Heart left ventricle (tissue), 16 donors: ENCODE measurements at regions of chr6 and their contacts with region 1.

Region 1: DNA sequence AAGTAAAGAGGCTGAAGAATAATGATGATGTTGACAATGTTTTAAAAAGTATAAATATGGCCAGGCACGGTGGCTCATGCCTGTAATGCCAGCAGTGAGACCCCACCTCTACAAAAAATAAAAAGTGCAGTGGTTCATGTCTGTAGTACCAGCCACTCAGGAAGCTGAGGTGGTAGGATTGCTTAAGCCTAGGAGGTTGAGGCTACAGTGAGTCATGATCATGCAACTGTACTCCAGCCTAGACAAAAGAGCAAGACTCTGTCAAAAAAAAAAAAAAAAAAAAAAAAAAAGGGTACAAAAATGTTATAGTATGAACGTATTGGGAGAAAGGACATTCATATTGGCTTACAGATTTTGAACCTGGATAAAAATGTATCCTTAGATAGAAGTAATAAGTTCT is 543.1 kb upstream of the IRAK1BP1 start:
- DNase-seq: no peak
- ATAC-seq: no peak
- H3K4me3 ChIP-seq: no peak overlapping the region
- H3K27ac ChIP-seq: no peak overlapping the region
- H3K4me1 ChIP-seq: no peaks in the 10 kb centered on the region
- H3K27me3 ChIP-seq: no peaks in the 10 kb centered on the region
- CTCF ChIP-seq: no peak
- POLR2A ChIP-seq: no peak

Region 2: DNA sequence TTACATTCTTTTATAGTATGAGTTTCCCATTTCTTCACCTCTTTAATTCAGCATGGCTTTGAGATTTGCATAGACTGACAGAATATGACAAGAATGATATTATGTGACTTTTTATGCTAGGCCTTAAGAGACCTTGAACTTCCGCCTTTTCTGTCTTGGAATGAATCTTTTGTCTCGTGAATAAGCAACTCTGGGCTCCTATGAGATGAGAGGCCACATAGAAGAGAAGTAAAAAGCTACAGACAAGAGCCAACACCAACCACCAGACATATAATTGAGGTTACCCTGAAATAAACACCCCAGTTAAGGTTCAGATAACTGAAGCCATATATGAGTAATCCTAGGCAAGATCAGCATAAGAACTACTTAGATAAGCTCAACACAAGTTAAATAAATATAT is 70.6 kb before region 1 on chr6:
- intact Hi-C with region 1: loop called in 2 of 10 experiments (anchors 1 to 2 kb)
- DNase-seq: no peak
- ATAC-seq: no peak
- H3K4me3 ChIP-seq: no peak overlapping the region
- H3K27ac ChIP-seq: no peak overlapping the region
- H3K4me1 ChIP-seq: no peaks in the 10 kb centered on the region
- H3K27me3 ChIP-seq: no peaks in the 10 kb centered on the region
- CTCF ChIP-seq: no peak
- POLR2A ChIP-seq: no peak

Region 3: GRCh38 chr6:78268591-78269452 is 55.4 kb before region 1 on chr6:
- intact Hi-C with region 1: no loop called
- DNase-seq: no peak
- ATAC-seq: no peak
- H3K4me3 ChIP-seq: no peak overlapping the region
- H3K27ac ChIP-seq: no peak overlapping the region
- H3K4me1 ChIP-seq: no peaks in the 10 kb centered on the region
- H3K27me3 ChIP-seq: no peaks in the 10 kb centered on the region
- CTCF ChIP-seq: no peak
- POLR2A ChIP-seq: no peak

Region 4: DNA sequence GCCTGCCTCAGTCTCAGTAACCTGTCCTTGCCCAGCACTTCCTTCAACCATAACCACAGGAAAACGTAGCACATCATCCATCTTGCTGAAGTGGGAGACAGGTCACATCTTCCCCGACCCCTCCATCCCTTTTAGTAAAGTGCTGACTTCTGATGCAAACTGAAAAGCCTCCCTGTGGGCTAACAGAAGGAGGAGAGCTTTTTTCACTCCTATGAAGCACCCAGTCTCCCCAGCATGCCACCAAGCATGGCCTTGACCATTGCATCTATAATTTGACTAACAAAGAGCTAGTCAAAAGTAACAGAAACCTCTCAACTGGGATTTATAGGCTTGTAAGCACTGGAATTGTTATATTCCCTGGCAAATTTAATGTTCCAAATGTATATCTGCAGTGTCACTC is 254.2 kb after region 1 on chr6:
- intact Hi-C with region 1: no loop called
- DNase-seq: no peak
- ATAC-seq: no peak
- H3K4me3 ChIP-seq: no peak overlapping the region
- H3K27ac ChIP-seq: no peak overlapping the region
- H3K4me1 ChIP-seq: no peaks in the 10 kb centered on the region
- H3K27me3 ChIP-seq: no peaks in the 10 kb centered on the region
- CTCF ChIP-seq: no peak
- POLR2A ChIP-seq: no peak